Right cardiac atrium (tissue), 5 donors: ENCODE measurements at regions of chr2 and their contacts with region 1.

Region 1: DNA sequence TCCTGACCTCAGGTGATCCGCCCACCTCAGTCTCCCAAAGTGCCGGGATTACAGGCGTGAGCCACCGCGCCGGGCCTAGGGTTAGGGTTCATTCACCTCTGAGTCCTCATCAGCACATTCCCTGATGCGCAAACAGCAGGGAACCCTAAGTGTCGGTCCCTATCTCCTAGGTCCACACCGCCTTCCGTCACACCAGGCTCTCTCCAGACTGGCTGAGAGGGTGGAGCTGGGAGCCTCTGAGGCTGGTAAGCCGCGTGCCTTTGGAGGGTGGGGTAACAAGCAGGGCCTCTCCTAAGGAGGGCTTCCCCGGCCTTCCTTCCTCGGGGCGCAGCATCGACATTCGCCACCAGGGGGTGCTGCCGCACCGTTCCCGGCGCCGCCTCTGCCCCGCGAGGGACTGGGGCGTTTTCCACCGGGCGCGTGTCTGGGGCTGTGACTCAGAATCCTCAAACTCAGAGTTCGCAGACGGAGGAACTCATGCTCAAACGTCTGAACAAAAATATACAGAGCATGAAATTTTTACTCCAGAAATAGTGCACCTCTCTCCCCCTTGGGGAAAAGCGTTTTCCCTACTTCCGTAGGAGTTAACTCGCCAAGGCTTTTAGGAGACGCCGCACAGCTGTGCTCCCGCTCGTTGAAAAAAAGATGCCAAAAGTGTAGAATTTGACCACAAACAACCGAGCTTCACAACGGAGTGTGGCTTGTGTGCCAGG is 63.9 kb upstream of the ASAP2 start:
- DNase-seq: peak; percentile 88 to 95 (median 95)
- ATAC-seq: peak; percentile 89 to 90
- H3K4me3 ChIP-seq: no peak overlapping the region
- H3K27ac ChIP-seq: no peak overlapping the region
- H3K4me1 ChIP-seq: no peaks in the 10 kb centered on the region
- H3K27me3 ChIP-seq: no peaks in the 10 kb centered on the region

Region 2: DNA sequence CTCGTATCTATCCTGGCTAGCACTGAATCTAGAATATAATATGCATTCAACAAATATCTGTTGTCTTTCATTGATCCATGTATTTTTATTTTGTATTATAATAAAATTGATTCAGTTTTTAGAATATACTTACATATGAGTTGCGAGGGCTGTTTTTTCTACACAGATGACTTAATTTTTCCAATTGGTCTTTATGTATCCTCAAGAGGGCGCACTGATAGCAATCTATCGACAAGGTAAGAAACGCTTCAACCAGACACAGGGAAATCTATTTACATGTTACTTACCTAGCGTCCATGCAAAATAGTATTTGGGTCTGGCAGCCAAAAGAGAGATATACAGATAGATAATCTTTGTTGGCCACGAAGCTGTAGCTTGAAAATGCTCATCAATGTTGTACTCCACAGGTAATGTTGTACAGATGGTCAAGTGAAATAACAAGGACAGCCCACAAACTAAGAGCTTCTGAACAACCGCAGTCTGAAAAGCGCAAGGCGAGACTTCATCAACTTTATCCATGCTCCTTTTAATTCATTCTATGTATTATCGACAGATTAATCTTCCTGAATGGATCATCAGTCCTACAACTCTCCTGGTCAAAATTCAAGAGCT is 269.8 kb before region 1 on chr2:
- intact Hi-C with region 1: loop called in 2 of 4 experiments (anchors 2 to 10 kb)
- DNase-seq: no peak
- ATAC-seq: no peak
- H3K4me3 ChIP-seq: no peak overlapping the region
- H3K27ac ChIP-seq: no peak overlapping the region
- H3K4me1 ChIP-seq: no peaks in the 10 kb centered on the region
- H3K27me3 ChIP-seq: no peaks in the 10 kb centered on the region

Region 3: GRCh38 chr2:9333591-9334171 is 191.0 kb after region 1 on chr2:
- intact Hi-C with region 1: loop called in 3 of 4 experiments (anchors 5 kb)
- DNase-seq: peak in 2 of 3 donors; percentile 56 to 65
- ATAC-seq: peak; percentile 78
- H3K4me3 ChIP-seq: no peak overlapping the region
- H3K27ac ChIP-seq: no peak overlapping the region
- H3K4me1 ChIP-seq: peaks cover 8% of the 10 kb centered on the region
- H3K27me3 ChIP-seq: no peaks in the 10 kb centered on the region

Region 4: GRCh38 chr2:9347411-9347881 is 204.7 kb after region 1 on chr2:
- intact Hi-C with region 1: loop called in 1 of 4 experiments (anchors 10 kb)
- DNase-seq: peak; percentile 81 to 83 (median 82)
- ATAC-seq: peak; percentile 94 to 95
- H3K4me3 ChIP-seq: no peak overlapping the region
- H3K27ac ChIP-seq: peak overlapping the region; percentile 85
- H3K4me1 ChIP-seq: peaks cover 9% of the 10 kb centered on the region
- H3K27me3 ChIP-seq: no peaks in the 10 kb centered on the region